Activated T-helper 1 cell treated with anti-CD3 and anti-CD28 coated beads, Interleukin-12 subunit alpha, Interleukin-12 subunit beta, Interleukin-2, Interleukin-4 antibody, amounts not matched to agents 30 ng/mL and 10 ng/mL and 1 ng/mL, durations not matched to agents 14 hours and 24 hours and 36 hours (primary cell): ENCODE measurements at regions of chr4 and their contacts with region 1.

Region 1: GRCh38 chr4:48963042-48963679 is 22.9 kb upstream of the CWH43 start:
- DNase-seq: peak; percentile 54
- H3K4me3 Mint-ChIP-seq: no peak overlapping the region
- H3K27ac Mint-ChIP-seq: no peak overlapping the region
- H3K4me1 Mint-ChIP-seq: no peaks in the 10 kb centered on the region
- H3K27me3 Mint-ChIP-seq: peaks cover 4% of the 10 kb centered on the region

Region 2: GRCh38 chr4:48445704-48446103 is 517.5 kb before region 1 on chr4:
- intact Hi-C with region 1: loop called (anchors 1 kb)
- DNase-seq: no peak
- H3K4me3 Mint-ChIP-seq: no peak overlapping the region
- H3K27ac Mint-ChIP-seq: no peak overlapping the region
- H3K4me1 Mint-ChIP-seq: no peaks in the 10 kb centered on the region
- H3K27me3 Mint-ChIP-seq: peaks cover 6% of the 10 kb centered on the region

Region 3: GRCh38 chr4:48578132-48578968 is 384.8 kb before region 1 on chr4:
- intact Hi-C with region 1: loop called (anchors 1 kb)
- DNase-seq: peak; percentile 17
- H3K4me3 Mint-ChIP-seq: no peak overlapping the region
- H3K27ac Mint-ChIP-seq: peak overlapping the region; percentile 6
- H3K4me1 Mint-ChIP-seq: peaks cover 10% of the 10 kb centered on the region
- H3K27me3 Mint-ChIP-seq: no peaks in the 10 kb centered on the region